CD4-positive, alpha-beta memory T cell (primary cell): ENCODE measurements at regions of chr15 and their contacts with region 1.

Region 1: GRCh38 chr15:38389924-38390542 is 63.9 kb upstream of the FAM98B start:
- DNase-seq: peak; percentile 31 to 47 (median 41)
- H3K4me3 ChIP-seq: no peak overlapping the region
- H3K4me3 Mint-ChIP-seq: no peak overlapping the region
- H3K27ac ChIP-seq: no peak overlapping the region
- H3K27ac Mint-ChIP-seq: no peak overlapping the region
- H3K4me1 ChIP-seq: no peaks in the 10 kb centered on the region
- H3K4me1 Mint-ChIP-seq: no peaks in the 10 kb centered on the region
- H3K27me3 ChIP-seq: no peaks in the 10 kb centered on the region
- H3K27me3 Mint-ChIP-seq: peaks cover 17 to 20% of the 10 kb centered on the region in 2 donors

Region 2: GRCh38 chr15:37995461-37996347 is 394.3 kb before region 1 on chr15:
- CTCF ChIA-PET with region 1: no interaction called
- POLR2A ChIA-PET with region 1: no interaction called
- intact Hi-C with region 1: loop called (anchors 10 kb)
- DNase-seq: peak in 1 of 5 donors; percentile 6
- H3K4me3 ChIP-seq: no peak overlapping the region
- H3K4me3 Mint-ChIP-seq: no peak overlapping the region
- H3K27ac ChIP-seq: no peak overlapping the region
- H3K27ac Mint-ChIP-seq: no peak overlapping the region
- H3K4me1 ChIP-seq: no peaks in the 10 kb centered on the region
- H3K4me1 Mint-ChIP-seq: no peaks in the 10 kb centered on the region
- H3K27me3 ChIP-seq: no peaks in the 10 kb centered on the region
- H3K27me3 Mint-ChIP-seq: peaks cover 4 to 8% of the 10 kb centered on the region in 2 donors